Posterior vena cava (tissue), 2 donors: ENCODE measurements at regions of chr7 and their contacts with region 1.

Region 1: DNA sequence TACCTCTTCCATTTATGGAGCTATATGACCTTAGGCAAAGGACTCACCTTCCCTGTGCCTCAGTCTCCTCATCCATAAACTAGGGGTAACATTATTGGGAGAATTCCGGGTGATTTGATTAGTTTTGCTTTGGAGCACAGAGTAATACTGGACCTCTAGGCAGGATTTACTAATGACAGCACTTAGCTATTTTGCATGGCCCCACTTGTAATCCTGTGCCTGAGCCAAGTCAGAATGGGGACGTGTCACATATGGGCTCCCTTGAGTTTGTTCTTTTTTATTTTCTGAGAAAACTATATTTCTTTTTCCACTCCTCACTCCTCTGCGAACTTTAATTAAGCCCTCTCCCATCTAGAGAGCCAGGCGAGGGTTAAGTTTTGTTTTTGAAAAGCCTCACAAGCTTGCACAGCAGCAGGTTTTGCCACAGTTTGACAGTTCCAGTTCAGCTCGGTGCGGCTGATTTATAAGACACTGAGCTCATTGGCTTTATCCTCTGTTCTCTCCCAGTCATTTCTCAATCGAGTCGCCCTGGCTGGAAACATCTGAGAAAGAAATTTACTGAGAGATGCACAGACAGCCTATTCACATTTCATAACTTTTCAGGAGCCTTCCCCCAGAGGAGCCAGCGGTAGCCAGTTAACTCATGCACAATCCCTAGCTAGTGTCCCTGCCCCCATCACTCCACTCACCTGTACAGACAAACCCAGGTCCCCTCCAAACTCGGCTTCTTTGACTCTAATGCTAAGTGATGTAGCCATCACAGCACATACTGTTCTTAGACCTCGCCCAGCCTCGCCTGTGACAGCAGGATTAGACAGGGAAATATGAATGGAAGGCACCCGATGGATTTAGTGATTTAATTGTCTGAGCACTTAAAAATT is 441.9 kb upstream of the NPVF start:
- DNase-seq: peak; percentile 81

Region 2: GRCh38 chr7:24059495-24060174 is 1610.6 kb before region 1 on chr7:
- intact Hi-C with region 1: loop called in 1 of 2 experiments (anchors 10 kb)
- DNase-seq: no peak

Region 3: DNA sequence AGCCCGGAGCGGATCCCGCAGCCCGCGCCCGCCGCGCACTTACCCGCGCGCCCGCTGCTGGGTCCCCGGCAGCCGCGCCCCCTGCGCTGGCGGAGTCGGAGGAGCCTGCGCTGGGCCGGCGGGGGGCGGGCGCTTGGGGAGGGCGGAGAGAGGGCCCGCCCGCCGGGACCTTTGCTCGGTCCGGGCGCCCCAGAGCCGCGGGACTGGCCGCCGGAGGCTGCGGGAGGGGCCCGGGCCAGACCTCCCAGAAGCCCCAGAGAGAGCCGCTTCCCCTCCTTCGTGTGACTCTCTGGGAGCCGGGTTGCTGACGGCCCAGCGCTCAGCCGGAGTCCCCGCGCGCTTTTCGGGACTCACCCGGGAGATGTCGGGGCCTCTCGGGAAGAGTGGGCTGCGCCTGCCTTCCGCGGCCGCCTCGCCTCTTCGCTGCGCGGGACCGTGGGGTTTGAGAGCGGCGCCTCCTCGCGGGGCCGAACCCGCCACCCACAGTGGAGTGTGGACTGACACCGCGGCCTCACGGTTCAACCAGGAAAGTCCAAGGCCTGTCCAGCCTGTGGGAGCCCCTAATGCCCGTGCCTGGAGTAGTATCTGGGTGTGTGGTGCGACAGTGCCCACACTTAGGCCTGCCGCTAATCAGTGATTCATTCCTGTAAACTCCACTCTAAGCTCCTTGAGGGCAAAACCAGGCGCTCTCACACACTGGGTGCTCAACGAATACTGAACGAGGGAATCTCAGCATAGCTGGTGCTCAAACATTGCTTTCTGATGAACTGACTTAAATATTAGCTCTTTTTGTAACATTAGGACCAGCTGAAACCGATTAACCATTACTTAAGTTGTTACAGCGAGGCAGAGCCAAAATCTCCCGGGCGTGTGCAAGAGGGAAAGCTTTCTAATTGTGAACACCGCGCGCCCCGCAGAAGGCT is 912.6 kb before region 1 on chr7 and contains the start of gene GSDME:
- intact Hi-C with region 1: no loop called
- DNase-seq: peak; percentile 87
- total RNA-seq, gene GSDME: 33.4 to 43.5 TPM

Region 4: DNA sequence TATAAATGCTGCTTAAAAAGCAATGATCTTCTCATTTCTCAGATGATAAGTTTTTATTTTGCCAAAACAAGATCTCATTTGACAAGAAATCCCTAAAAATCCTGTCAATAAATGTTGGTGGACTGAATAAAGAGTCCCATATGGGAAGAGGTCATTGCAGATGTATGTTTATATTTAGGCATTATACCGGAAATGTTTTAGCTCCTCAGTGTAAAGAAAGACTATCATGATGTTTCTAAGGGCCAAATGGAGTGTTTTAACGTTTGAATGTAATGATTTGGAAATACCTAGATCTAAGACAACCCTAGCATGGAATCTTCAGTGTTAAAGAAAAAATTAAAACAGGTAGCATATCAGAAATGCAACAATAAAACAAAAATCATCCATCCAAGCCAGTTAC is 24.0 kb after region 1 on chr7:
- intact Hi-C with region 1: no loop called
- DNase-seq: no peak